HCT116 (cell line): ENCODE measurements at regions of chr13 and their contacts with region 1.

Region 1: GRCh38 chr13:100828226-100828625 is 153.6 kb upstream of the TMTC4 start:
- DNase-seq: no peak
- ATAC-seq: peak; percentile 58; the same call in 1 of the 2 replicates
- H3K4me3 ChIP-seq: no peak overlapping the region
- H3K27ac ChIP-seq: no peak overlapping the region
- H3K4me1 ChIP-seq: no peaks in the 10 kb centered on the region
- H3K27me3 ChIP-seq: peaks cover 59% of the 10 kb centered on the region
- CTCF ChIP-seq: peak in 2 of 3 experiments; percentile 17 to 20; a peak in 1 of 6 replicates
- POLR2A ChIP-seq: no peak
- RAD21 ChIP-seq: peak; percentile 29

Region 2: GRCh38 chr13:99626461-99627082 is 1201.7 kb before region 1 on chr13:
- CTCF ChIA-PET with region 1: no interaction called
- POLR2A ChIA-PET with region 1: no interaction called
- RAD21 ChIA-PET with region 1: no interaction called
- intact Hi-C with region 1: no loop called
- DNase-seq: peak; percentile 37
- ATAC-seq: peak; percentile 87
- H3K4me3 ChIP-seq: peak overlapping the region in 1 of 2 experiments; percentile 36; a peak in 2 of 4 replicates
- H3K27ac ChIP-seq: peak overlapping the region; percentile 54
- H3K4me1 ChIP-seq: peaks cover 30 to 32% of the 10 kb centered on the region in 2 experiments
- H3K27me3 ChIP-seq: no peaks in the 10 kb centered on the region
- CTCF ChIP-seq: no peak
- POLR2A ChIP-seq: no peak
- RAD21 ChIP-seq: no peak

Region 3: DNA sequence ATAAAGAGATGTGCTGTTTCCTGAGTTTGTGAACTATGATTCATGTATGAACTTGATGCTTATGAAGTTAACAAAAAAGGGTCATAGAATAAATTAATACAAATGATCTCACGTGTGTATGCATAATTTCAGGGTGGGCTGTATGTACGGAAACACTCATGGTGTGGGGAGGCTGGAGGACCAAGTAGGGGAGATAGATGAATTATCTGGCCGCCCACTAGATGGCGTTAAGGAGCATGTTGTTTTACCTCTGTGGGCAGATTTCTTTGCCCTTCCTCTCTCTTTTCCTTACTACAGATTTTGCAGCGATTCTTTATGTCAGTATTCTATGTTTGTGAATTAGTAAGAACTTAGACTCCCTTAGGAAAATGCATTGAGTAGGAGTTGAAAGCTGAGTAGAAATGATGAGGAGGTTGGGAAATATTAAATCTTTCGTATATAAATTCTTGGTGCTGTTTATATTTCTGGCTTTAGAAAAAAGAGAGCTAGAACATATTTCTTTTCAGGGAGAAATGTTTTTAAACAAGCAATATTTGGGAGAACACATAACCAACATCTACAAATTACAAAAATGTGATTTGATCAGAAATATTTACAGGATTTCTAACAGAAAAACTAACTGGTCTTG is 106.2 kb before region 1 on chr13:
- CTCF ChIA-PET with region 1: no interaction called
- POLR2A ChIA-PET with region 1: no interaction called
- RAD21 ChIA-PET with region 1: no interaction called
- intact Hi-C with region 1: loop called (anchors 5 kb)
- DNase-seq: peak; percentile 37
- ATAC-seq: peak; percentile 89
- H3K4me3 ChIP-seq: no peak overlapping the region
- H3K27ac ChIP-seq: no peak overlapping the region
- H3K4me1 ChIP-seq: no peaks in the 10 kb centered on the region
- H3K27me3 ChIP-seq: no peaks in the 10 kb centered on the region
- CTCF ChIP-seq: peak; percentile 33 to 83 (median 71); a peak in 5 of 6 replicates
- POLR2A ChIP-seq: no peak
- RAD21 ChIP-seq: peak; percentile 52